AG04449 (cell line): ENCODE measurements at regions of chr7 and their contacts with region 1.

Region 1: DNA sequence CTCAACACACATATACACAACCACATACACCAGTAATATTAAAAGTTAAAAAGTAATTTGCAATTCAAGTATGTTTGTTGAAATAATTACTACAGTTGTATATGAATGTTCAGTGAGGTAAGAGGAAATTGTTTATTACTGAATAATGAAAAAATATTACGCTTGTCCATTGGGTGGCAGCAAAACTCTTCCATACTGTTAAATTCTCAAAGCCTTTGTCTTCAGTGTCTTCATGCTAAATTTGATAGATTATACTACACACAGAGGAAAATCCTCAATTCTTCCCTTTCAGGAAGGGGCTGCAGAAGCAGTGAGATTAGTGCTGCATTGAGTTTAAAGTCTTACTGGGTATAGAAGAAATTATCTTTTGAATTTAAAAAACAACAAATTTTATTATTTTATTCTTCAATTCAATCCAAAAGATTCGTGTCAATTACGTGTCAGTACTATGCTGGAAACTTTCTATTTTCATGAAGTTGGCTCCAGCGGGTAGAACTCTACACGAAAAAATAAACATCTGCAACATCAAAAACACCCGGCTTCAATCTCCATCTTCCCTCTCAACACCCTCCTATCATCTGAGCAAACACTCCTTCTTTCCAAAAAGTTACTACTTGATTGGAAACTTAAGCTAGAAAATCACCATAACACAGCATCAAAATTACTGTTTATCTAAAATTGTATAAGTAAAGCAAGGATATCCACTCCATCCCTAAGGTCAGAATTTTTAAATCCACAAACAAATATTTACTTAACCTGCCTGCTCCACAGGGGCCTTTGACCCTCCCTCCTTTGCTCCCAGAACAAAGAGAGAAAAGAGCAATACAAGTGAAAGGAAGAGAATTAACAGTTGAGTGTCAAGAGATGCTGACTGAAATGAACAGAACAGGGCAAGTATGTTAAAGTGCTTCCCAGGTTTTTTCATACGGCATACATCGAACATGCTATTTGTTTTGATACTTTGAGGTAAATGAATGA is 37.0 kb upstream of the TES start:
- DNase-seq: no peak
- H3K4me3 ChIP-seq: no peak overlapping the region
- CTCF ChIP-seq: no peak

Region 2: DNA sequence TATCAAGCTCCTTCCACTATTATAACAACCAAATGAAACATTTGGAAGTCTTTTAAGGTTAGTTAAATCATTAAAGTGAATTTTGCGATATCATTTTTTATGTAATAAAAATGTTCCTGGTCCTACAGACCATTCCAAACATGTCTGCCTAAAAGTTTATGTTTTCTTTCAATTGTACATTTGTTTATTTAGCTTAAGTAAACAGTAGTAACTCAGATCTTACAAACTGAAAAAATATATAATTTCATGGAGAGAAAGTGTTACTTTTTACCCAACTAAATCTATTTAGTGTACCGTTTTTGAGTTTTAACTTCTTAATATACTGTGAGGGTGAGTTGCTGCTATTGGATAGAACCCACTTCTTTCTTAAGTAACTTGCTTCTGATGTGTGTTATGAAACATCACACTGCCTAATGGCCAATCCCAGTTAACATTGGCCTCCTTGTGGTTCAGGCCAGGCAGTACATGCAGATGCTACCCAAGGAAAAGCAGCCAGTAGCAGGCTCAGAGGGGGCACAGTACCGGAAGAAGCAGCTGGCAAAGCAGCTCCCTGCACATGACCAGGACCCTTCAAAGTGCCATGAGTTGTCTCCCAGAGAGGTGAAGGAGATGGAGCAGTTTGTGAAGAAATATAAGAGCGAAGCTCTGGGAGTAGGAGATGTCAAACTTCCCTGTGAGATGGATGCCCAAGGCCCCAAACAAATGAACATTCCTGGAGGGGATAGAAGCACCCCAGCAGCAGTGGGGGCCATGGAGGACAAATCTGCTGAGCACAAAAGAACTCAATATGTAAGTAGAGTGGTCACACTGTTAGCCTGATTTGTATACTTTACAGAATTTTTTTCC is 76.6 kb after region 1 on chr7:
- CTCF ChIA-PET with region 1: interaction called, 291 read pairs
- POLR2A ChIA-PET with region 1: no interaction called
- DNase-seq: no peak
- H3K4me3 ChIP-seq: no peak overlapping the region
- CTCF ChIP-seq: peak; percentile 58

Region 3: GRCh38 chr7:116582806-116583444 is 409.6 kb after region 1 on chr7:
- CTCF ChIA-PET with region 1: interaction called, 57 read pairs
- POLR2A ChIA-PET with region 1: no interaction called
- DNase-seq: peak; percentile 91
- H3K4me3 ChIP-seq: no peak overlapping the region
- CTCF ChIP-seq: no peak